Caco-2 (cell line): ENCODE measurements at regions of chr1 and their contacts with region 1.

Region 1: GRCh38 chr1:96934282-96934681 is 212.7 kb downstream of the PTBP2 start:
- DNase-seq: peak; percentile 48 to 61
- H3K4me3 ChIP-seq: no peak overlapping the region
- H3K4me3 Mint-ChIP-seq: no peak overlapping the region
- H3K27ac Mint-ChIP-seq: no peak overlapping the region
- H3K4me1 ChIP-seq: peaks cover 32% of the 10 kb centered on the region
- H3K4me1 Mint-ChIP-seq: peaks cover 15% of the 10 kb centered on the region
- H3K27me3 ChIP-seq: no peaks in the 10 kb centered on the region
- H3K27me3 Mint-ChIP-seq: no peaks in the 10 kb centered on the region
- CTCF ChIP-seq: no peak

Region 2: DNA sequence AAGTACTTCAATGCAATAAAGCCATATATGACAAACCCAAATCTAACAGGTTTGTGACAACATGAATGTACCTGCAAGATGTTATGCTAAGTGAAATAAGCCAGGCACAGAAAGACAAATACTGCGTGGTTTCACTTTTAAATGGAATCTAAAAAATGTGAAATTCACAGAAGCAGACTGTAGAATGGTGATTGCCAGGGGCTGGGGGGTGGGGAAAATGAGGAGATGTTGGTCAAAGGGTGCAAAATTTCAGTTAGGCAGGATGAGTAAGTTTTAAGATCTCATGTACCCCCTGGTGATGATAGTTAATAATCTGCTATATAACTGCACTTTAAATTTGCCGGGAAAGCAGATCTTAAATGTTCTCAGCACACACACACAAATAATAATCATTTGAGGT is 52.2 kb before region 1 on chr1:
- CTCF ChIA-PET with region 1: no interaction called
- POLR2A ChIA-PET with region 1: no interaction called
- intact Hi-C with region 1: loop called (anchors 5 kb)
- DNase-seq: no peak
- H3K4me3 ChIP-seq: no peak overlapping the region
- H3K4me3 Mint-ChIP-seq: no peak overlapping the region
- H3K27ac Mint-ChIP-seq: no peak overlapping the region
- H3K4me1 ChIP-seq: peaks cover 14% of the 10 kb centered on the region; the same call in 1 of the 2 replicates
- H3K4me1 Mint-ChIP-seq: peaks cover 9% of the 10 kb centered on the region
- H3K27me3 ChIP-seq: no peaks in the 10 kb centered on the region
- H3K27me3 Mint-ChIP-seq: no peaks in the 10 kb centered on the region
- CTCF ChIP-seq: no peak